ENCODE measurements at regions of chr11 and their contacts with region 1.

Region 1: GRCh38 chr11:56841210-56841810 is 92.8 kb upstream of the OR9G4 start:
- DNase-seq: peak; percentile 35 to 86
- ATAC-seq: peak; percentile 66 to 93; a peak in 5 of 6 replicates
- H3K4me3 ChIP-seq: no peak overlapping the region
- H3K27ac ChIP-seq: peak overlapping the region; percentile 88 to 94
- H3K4me1 ChIP-seq: peaks cover 14% of the 10 kb centered on the region
- CTCF ChIP-seq: peak; percentile 89
- EP300 ChIP-seq: no peak
- POLR2A ChIP-seq: no peak
- RAD21 ChIP-seq: peak; percentile 98 to 99

Region 2: DNA sequence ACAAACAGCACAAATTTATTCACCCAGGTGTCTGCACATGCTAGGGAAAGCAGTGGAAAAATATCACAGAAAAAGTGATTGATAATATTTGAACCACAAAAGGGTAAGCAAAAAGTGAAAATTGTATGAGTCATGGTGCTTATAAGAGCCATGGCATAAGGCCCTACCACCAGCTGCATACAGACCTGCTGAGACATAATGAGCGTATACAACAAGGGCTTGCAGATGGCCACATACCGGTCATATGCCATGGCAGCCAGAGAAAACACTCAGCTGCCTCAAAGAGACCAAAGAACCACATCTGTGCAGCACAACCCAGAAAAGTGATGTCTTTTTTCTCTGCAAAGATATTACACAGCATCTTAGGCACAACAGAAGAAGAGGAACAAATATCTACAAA is 21.4 kb before region 1 on chr11:
- CTCF ChIA-PET with region 1: interaction called, 15 read pairs
- POLR2A ChIA-PET with region 1: no interaction called
- DNase-seq: no peak
- ATAC-seq: no peak
- H3K4me3 ChIP-seq: no peak overlapping the region
- H3K27ac ChIP-seq: no peak overlapping the region
- H3K4me1 ChIP-seq: no peaks in the 10 kb centered on the region
- CTCF ChIP-seq: no peak
- EP300 ChIP-seq: no peak
- POLR2A ChIP-seq: no peak
- RAD21 ChIP-seq: no peak

Region 3: GRCh38 chr11:56910785-56911184 is 69.5 kb after region 1 on chr11:
- CTCF ChIA-PET with region 1: interaction called, 26 read pairs
- POLR2A ChIA-PET with region 1: interaction called, 3 read pairs
- DNase-seq: peak; percentile 49 to 78
- ATAC-seq: peak; percentile 66 to 72
- H3K4me3 ChIP-seq: peak overlapping the region; percentile 13; the same call in 1 of the 3 replicates
- H3K27ac ChIP-seq: peak overlapping the region; percentile 95 to 100
- H3K4me1 ChIP-seq: peaks cover 48% of the 10 kb centered on the region
- CTCF ChIP-seq: no peak
- EP300 ChIP-seq: no peak
- POLR2A ChIP-seq: no peak
- RAD21 ChIP-seq: peak in 1 of 2 experiments; percentile 28; a peak in 2 of 5 replicates

Region 4: GRCh38 chr11:56923116-56923515 is 81.8 kb after region 1 on chr11:
- CTCF ChIA-PET with region 1: interaction called, 10 read pairs
- POLR2A ChIA-PET with region 1: no interaction called
- DNase-seq: no peak
- ATAC-seq: no peak
- H3K4me3 ChIP-seq: no peak overlapping the region
- H3K27ac ChIP-seq: peak overlapping the region in 1 of 2 experiments; percentile 42; a peak in 4 of 6 replicates
- H3K4me1 ChIP-seq: no peaks in the 10 kb centered on the region
- CTCF ChIP-seq: no peak
- EP300 ChIP-seq: no peak
- POLR2A ChIP-seq: no peak
- RAD21 ChIP-seq: no peak

Region 5: DNA sequence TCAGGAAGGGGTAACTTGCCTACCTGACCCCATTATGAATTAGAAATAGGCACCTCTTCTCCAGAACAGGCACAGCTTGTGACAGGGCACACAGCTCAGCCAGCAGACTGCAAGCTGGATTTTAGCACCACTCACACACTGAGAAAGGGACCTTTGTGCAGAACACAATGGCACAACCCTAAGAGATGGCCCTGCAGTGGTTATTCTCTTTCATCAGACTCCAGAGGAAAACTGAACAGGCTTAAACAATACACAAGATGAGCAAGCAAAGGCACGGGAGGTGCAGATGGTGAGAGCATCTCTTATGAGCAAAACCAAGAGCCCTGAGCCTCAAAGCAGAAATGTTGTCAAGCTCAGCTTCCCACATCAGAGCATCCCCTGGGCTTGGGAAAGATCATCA is 246.7 kb after region 1 on chr11:
- CTCF ChIA-PET with region 1: interaction called, 11 read pairs
- POLR2A ChIA-PET with region 1: no interaction called
- DNase-seq: no peak
- ATAC-seq: no peak
- H3K4me3 ChIP-seq: no peak overlapping the region
- H3K27ac ChIP-seq: peak overlapping the region; percentile 23 to 46; a peak in 3 of 6 replicates
- H3K4me1 ChIP-seq: peaks cover 22% of the 10 kb centered on the region; the same call in 1 of the 3 replicates
- CTCF ChIP-seq: no peak
- EP300 ChIP-seq: no peak
- POLR2A ChIP-seq: no peak
- RAD21 ChIP-seq: no peak

Region 6: GRCh38 chr11:57237204-57237681 is 395.9 kb after region 1 on chr11 and contains the start of gene APLNR:
- CTCF ChIA-PET with region 1: interaction called, 38 read pairs
- POLR2A ChIA-PET with region 1: no interaction called
- DNase-seq: no peak
- ATAC-seq: no peak
- H3K4me3 ChIP-seq: no peak within 1 kb of the TSS
- H3K27ac ChIP-seq: 0 out of 6 replicates have a peak within 1 kb of the TSS, but pooled peaks of 1 of the 2 experiments have one; percentile 24
- H3K4me1 ChIP-seq: peaks cover 15% of the 10 kb centered on the region; the same call in 2 of the 3 replicates
- CTCF ChIP-seq: no peak
- EP300 ChIP-seq: no peak
- POLR2A ChIP-seq: no peak
- RAD21 ChIP-seq: no peak
- polyA plus RNA-seq, gene APLNR: 0.08 and 0.14 TPM in 2 replicates

Region 7: DNA sequence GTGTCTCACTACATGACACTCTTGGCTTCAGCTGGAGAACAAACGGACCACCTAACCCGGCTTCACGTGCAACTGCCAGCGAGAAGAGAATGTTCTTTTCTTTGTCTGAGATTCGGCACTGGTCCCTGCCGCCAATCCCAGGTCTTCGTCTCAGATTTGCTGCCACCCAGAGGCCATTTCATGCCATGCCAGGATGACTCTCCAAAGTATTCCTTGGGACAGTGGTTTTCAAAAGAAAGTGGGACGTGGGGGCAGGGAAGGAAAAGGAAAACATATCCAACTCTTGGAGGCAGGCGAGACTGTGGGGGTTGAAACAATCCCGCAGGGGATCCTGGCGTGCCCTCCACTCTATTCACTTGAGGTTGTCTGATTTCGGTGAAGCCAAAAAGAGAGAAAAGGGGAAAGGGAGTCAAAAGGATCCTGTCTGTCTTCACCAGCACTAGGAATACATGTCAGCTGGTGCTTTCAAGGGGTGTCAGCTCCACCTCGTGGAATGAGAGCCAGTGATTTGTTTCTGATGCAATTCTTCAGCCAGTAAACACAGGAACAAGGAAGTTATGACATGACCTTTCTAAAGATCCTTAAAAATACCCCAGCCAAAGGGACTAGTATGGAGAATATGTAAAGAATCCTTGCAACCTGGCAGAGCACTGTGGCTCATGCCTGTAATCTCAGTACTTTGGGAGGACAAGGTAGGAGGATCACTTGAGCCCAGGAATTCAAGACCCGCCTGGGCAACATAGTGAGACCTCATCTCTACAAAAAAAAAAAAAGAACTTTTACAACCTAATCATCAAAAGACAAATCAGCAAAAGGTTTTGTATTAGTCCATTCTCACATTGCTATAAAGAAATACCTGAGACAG is 436.8 kb after region 1 on chr11:
- CTCF ChIA-PET with region 1: interaction called, 28 read pairs
- POLR2A ChIA-PET with region 1: no interaction called
- DNase-seq: peak; percentile 81 to 89
- ATAC-seq: peak; percentile 96 to 98
- H3K4me3 ChIP-seq: no peak overlapping the region
- H3K27ac ChIP-seq: peak overlapping the region; percentile 85 to 89
- H3K4me1 ChIP-seq: peaks cover 22% of the 10 kb centered on the region
- CTCF ChIP-seq: peak; percentile 81
- EP300 ChIP-seq: no peak
- POLR2A ChIP-seq: no peak
- RAD21 ChIP-seq: peak; percentile 71 to 81